Sciatic nerve (tissue), 2 donors: ENCODE measurements at regions of chr7 and their contacts with region 1.

Region 1: GRCh38 chr7:94792270-94792669 is 115.1 kb upstream of the PPP1R9A start:
- DNase-seq: no peak
- ATAC-seq: no peak

Region 2: GRCh38 chr7:93678185-93678584 is 1114.1 kb before region 1 on chr7:
- intact Hi-C with region 1: loop called (anchors 5 kb)
- DNase-seq: no peak
- ATAC-seq: no peak

Region 3: GRCh38 chr7:94769726-94770125 is 22.5 kb before region 1 on chr7:
- intact Hi-C with region 1: no loop called
- DNase-seq: no peak
- ATAC-seq: no peak